HepG2 (cell line): ENCODE measurements at regions of chr3 and their contacts with region 1.

Region 1: DNA sequence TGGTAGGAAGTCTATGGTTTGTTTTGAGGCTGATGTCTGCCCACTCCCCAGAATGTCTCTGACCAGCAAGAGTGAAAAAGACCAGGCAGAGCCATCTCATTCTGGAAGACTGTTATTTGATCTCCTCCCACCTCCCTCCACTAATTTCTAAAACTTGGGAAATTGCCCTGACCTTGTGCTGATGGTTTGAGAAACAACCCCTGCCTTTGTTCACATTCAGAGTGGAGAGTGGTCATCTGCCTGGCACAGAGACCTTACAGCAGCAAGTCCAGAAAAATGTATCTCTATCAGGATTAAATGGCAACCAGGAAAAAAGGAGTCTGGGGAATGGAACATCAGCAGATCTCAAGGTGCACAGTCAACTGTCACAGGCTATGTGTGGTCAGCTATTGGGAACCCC is 25.7 kb downstream of the SPATA12 start:
- DNase-seq: peak; percentile 25
- ATAC-seq: no peak
- H3K4me3 ChIP-seq: no peak overlapping the region
- H3K27ac ChIP-seq: no peak overlapping the region
- H3K4me1 ChIP-seq: peaks cover 55% of the 10 kb centered on the region
- H3K27me3 ChIP-seq: peaks cover 0 to 3% of the 10 kb centered on the region in 2 experiments; a peak in 1 of 5 replicates
- CTCF ChIP-seq: no peak
- EP300 ChIP-seq: no peak
- POLR2A ChIP-seq: no peak
- RAD21 ChIP-seq: no peak

Region 2: DNA sequence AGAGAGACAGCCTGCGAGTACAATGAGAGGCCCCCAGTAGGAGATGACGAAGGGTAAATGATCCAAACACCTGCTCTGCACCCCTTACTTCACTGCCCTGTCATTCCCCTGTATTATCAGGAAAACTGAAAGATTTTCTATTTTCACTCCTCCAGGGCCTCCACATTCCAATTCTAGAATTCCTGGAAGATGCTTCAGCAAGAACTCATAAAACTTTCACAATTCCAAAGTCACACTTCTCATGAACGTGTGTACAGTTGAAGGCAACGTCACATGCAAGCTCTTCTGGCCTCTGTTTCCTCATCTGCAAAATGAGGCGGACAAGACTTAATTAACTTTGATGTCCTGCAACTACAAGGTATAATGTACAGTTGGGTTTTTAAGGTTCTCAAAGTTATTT is 88.5 kb before region 1 on chr3:
- CTCF ChIA-PET with region 1: no interaction called
- POLR2A ChIA-PET with region 1: no interaction called
- in situ Hi-C with region 1: loop called (anchors 10 kb)
- intact Hi-C with region 1: no loop called
- DNase-seq: no peak
- ATAC-seq: no peak
- H3K4me3 ChIP-seq: no peak overlapping the region
- H3K27ac ChIP-seq: no peak overlapping the region
- H3K4me1 ChIP-seq: peaks cover 30% of the 10 kb centered on the region
- H3K27me3 ChIP-seq: no peaks in the 10 kb centered on the region
- CTCF ChIP-seq: no peak
- EP300 ChIP-seq: no peak
- POLR2A ChIP-seq: no peak
- RAD21 ChIP-seq: no peak

Region 3: DNA sequence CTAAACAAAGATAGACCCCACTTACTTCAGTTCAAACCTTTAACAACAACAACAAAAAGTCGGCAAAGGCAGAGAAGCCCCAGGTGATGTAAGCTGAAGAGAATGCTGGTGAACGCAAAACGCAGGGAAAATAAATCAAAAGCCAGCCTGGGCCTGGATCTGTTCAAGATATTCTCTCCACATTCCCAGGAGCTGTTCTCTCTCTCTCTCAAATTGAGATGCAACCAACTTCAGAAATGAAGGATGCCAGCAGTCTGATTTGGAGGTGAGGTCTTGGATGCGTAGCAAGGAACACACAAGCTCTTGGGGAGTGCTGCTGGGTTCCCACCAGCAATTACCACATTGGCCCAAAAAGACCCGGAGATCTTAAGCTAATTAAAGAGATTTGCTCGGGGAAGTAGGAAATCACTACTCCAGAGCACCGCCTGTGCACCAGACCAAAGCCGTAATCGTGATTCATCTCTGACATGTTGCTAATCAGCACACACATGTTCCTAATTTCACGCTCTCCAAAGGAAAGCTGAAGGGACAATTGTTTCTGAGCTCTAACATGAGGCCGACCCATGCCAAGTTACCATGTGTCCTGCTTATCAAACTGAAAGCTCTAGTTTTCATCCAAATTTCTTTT is 41.8 kb after region 1 on chr3:
- CTCF ChIA-PET with region 1: no interaction called
- POLR2A ChIA-PET with region 1: no interaction called
- in situ Hi-C with region 1: no loop called
- intact Hi-C with region 1: loop called (anchors 1 kb)
- DNase-seq: no peak
- ATAC-seq: no peak
- H3K4me3 ChIP-seq: no peak overlapping the region
- H3K27ac ChIP-seq: no peak overlapping the region
- H3K4me1 ChIP-seq: no peaks in the 10 kb centered on the region
- H3K27me3 ChIP-seq: peaks cover 1 to 42% of the 10 kb centered on the region in 2 experiments; a peak in 3 of 5 replicates
- CTCF ChIP-seq: no peak
- EP300 ChIP-seq: no peak
- POLR2A ChIP-seq: no peak
- RAD21 ChIP-seq: no peak

Region 4: GRCh38 chr3:57647292-57647940 is 561.2 kb after region 1 on chr3:
- CTCF ChIA-PET with region 1: no interaction called
- POLR2A ChIA-PET with region 1: no interaction called
- in situ Hi-C with region 1: no loop called
- intact Hi-C with region 1: no loop called
- DNase-seq: no peak
- ATAC-seq: no peak
- H3K4me3 ChIP-seq: no peak overlapping the region
- H3K27ac ChIP-seq: no peak overlapping the region
- H3K4me1 ChIP-seq: no peaks in the 10 kb centered on the region
- H3K27me3 ChIP-seq: no peaks in the 10 kb centered on the region
- CTCF ChIP-seq: no peak
- EP300 ChIP-seq: no peak
- POLR2A ChIP-seq: no peak
- RAD21 ChIP-seq: no peak